Lower leg skin (tissue), 4 donors: ENCODE measurements at regions of chr1 and their contacts with region 1.

Region 1: DNA sequence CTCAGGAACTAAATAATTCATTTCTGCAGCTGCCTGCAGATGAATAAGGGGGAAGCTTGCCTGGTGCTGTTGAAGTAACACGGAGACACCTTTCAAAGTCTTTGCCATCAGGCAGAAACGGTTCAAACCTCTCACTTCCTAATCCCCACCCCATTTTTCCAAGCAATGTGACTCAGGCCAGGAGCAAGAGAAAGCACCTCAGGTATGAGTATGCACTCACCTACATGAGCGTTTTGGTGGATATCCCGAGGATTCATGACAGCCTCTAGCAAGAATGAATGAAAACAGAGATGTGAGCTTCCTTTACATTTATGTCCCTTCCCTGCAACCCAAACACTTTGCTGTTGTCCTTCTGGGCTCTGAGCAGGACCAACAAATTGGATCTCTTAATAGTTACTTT is 63.4 kb upstream of the LAX1 start:
- DNase-seq: no peak
- H3K4me3 ChIP-seq: no peak overlapping the region
- CTCF ChIP-seq: no peak
- POLR2A ChIP-seq: no peak

Region 2: GRCh38 chr1:203512830-203513611 is 188.6 kb before region 1 on chr1:
- intact Hi-C with region 1: loop called (anchors 2 kb)
- DNase-seq: peak; percentile 84 to 93
- H3K4me3 ChIP-seq: no peak overlapping the region
- CTCF ChIP-seq: no peak
- POLR2A ChIP-seq: no peak

Region 3: DNA sequence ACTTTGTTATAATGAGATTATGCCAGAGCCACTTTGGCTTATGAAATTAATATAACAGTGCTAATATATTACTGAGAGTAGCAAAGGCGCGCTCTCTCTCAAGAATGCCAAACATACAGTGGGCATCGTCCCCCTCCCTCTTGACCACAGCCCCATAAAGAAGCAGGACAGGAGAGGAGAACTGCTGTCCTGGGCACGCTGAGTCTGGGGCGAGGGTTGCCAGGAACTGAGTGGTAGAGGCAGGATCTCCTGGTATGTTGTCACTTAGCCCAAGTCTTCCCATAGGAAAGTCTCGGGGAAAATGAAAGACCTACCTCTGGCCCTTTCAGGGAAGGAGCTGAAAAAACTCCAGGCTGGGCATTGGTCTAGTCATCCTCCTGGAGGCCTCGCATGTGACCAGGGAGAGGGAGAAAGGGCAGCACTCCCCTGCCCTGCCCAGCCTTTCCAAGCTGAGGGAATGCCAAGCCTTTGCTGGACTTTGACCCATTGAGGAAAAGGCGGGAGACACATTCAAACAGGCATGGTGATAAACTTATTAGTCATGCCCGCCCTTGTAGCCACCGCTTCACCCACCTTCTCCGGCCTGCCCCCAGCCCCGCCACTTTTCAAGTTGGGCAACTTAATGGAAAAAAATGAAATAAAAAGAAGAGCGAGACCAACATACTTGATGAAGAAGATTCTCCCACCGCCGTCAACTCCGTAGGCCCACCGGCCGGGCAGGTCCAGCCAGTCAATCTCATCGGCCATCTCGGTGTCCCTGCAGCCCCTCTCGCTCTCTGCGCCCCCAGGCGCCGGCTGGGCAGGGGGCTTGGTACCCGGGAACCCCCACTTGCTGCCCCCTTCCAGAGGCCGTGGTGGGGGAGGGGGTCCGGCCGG is 675.6 kb after region 1 on chr1:
- intact Hi-C with region 1: no loop called
- DNase-seq: no peak
- H3K4me3 ChIP-seq: peak overlapping the region; percentile 17
- CTCF ChIP-seq: no peak
- POLR2A ChIP-seq: no peak